ENCODE measurements at regions of chr1 and their contacts with region 1.

Region 1: DNA sequence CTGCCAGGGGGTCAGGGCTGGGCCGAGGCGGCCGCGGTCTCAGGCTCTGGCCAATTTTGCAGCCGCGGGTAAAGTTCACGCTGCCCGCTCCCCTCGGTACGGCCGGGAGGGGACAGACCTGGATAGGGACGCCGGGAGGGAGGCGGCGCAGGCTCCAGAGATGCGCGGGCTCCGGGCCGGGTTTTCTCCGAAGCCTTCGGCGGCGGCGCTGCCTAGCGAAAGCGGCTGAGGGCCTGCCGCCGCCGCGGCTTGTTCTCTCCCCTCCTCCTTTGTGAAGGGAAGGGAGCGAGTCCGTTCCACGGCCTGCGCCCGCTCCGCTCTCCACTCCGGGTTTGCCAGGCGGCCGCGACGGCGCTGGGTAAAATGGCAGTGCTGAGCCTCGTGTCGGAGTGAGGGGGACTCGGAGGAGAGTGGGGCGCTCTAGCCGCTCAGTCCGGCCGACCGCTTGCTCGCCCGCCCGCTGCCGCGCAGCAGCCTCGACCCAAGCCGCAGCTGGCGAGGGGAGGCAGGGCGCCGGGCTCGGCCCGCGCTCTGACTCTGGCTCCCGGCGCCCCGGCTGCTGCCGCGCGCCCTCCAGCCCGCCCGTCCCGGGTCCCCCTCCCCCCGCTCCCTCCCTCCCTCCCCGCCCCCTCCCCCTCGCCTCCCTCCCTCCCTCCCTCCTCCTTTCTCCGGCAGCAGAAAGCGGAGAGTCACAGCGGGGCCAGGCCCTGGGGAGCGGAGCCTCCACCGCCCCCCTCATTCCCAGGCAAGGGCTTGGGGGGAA is at the start of gene ARID1A:
- DNase-seq: peak; percentile 92 to 98 (median 95)
- ATAC-seq: peak; percentile 59
- H3K4me3 ChIP-seq: peak within 1 kb of the TSS; percentile 74 to 86
- H3K4me3 Mint-ChIP-seq: peak within 1 kb of the TSS; percentile 93
- H3K27ac ChIP-seq: peak within 1 kb of the TSS; percentile 44 to 72
- H3K27ac Mint-ChIP-seq: peak within 1 kb of the TSS; percentile 94
- H3K4me1 ChIP-seq: peaks cover 51% of the 10 kb centered on the region
- H3K4me1 Mint-ChIP-seq: peaks cover 35% of the 10 kb centered on the region
- H3K27me3 ChIP-seq: no peaks in the 10 kb centered on the region
- H3K27me3 Mint-ChIP-seq: no peaks in the 10 kb centered on the region
- CTCF ChIP-seq: no peak
- total RNA-seq, gene ARID1A: 104 to 105 TPM

Region 2: GRCh38 chr1:26431979-26432695 is 263.4 kb before region 1 on chr1 and contains the start of gene DHDDS:
- CTCF ChIA-PET with region 1: no interaction called
- POLR2A ChIA-PET with region 1: interaction called, 3 read pairs
- intact Hi-C with region 1: loop called in 1 of 2 experiments (anchors 2 kb)
- DNase-seq: peak; percentile 96 to 99 (median 99)
- ATAC-seq: peak; percentile 96
- H3K4me3 ChIP-seq: peak within 1 kb of the TSS; percentile 72 to 78
- H3K4me3 Mint-ChIP-seq: peak within 1 kb of the TSS; percentile 95
- H3K27ac ChIP-seq: peak within 1 kb of the TSS; percentile 73 to 81
- H3K27ac Mint-ChIP-seq: peak within 1 kb of the TSS; percentile 96
- H3K4me1 ChIP-seq: peaks cover 20% of the 10 kb centered on the region
- H3K4me1 Mint-ChIP-seq: peaks cover 21% of the 10 kb centered on the region
- H3K27me3 ChIP-seq: no peaks in the 10 kb centered on the region
- H3K27me3 Mint-ChIP-seq: no peaks in the 10 kb centered on the region
- CTCF ChIP-seq: no peak
- total RNA-seq, gene DHDDS: 23.9 to 29.2 TPM

Region 3: DNA sequence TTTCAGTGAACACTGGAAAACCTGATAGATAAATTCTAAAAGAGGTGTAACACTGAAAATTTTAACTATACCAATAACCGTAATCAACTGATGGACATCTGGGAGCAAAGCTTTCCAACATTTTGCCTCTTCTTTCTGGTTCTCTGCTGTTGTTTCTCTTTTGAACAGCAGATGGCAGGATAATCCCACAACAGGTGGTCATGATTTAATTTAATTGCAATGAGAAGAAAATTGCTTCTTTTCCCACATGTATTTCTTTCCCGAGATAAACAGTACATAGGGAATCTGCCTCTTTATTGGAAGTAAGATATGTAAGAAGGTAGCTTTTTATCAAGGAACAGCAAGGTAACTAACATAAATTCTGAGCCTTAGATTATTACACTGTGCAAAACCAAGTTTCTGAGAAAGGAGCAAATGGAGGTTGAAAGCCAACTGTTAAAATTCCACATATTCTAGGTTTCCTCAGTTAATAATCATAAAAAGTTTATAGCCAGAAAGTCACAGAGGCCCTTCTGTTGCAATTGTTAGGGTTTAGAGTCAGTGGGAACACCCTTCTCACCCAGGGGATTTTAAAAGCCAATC is 93.1 kb before region 1 on chr1:
- CTCF ChIA-PET with region 1: interaction called, 44 read pairs
- POLR2A ChIA-PET with region 1: interaction called, 20 read pairs
- intact Hi-C with region 1: loop called in 1 of 2 experiments (anchors 1 kb)
- DNase-seq: peak in 5 of 9 experiments; percentile 16 to 81 (median 49)
- ATAC-seq: peak; percentile 67
- H3K4me3 ChIP-seq: no peak overlapping the region
- H3K4me3 Mint-ChIP-seq: no peak overlapping the region
- H3K27ac ChIP-seq: no peak overlapping the region
- H3K27ac Mint-ChIP-seq: no peak overlapping the region
- H3K4me1 ChIP-seq: peaks cover 5% of the 10 kb centered on the region
- H3K4me1 Mint-ChIP-seq: peaks cover 8% of the 10 kb centered on the region
- H3K27me3 ChIP-seq: no peaks in the 10 kb centered on the region
- H3K27me3 Mint-ChIP-seq: no peaks in the 10 kb centered on the region
- CTCF ChIP-seq: peak; percentile 98

Region 4: GRCh38 chr1:26705788-26706311 is 10.3 kb after region 1 on chr1:
- CTCF ChIA-PET with region 1: interaction called, 17 read pairs
- POLR2A ChIA-PET with region 1: interaction called, 20 read pairs
- intact Hi-C with region 1: loop called in 1 of 2 experiments (anchors 1 kb)
- DNase-seq: no peak
- ATAC-seq: no peak
- H3K4me3 ChIP-seq: no peak overlapping the region
- H3K4me3 Mint-ChIP-seq: peak overlapping the region; percentile 68
- H3K27ac ChIP-seq: peak overlapping the region in 1 of 2 experiments; percentile 39
- H3K27ac Mint-ChIP-seq: peak overlapping the region; percentile 87
- H3K4me1 ChIP-seq: peaks cover 71% of the 10 kb centered on the region
- H3K4me1 Mint-ChIP-seq: peaks cover 49% of the 10 kb centered on the region
- H3K27me3 ChIP-seq: no peaks in the 10 kb centered on the region
- H3K27me3 Mint-ChIP-seq: no peaks in the 10 kb centered on the region
- CTCF ChIP-seq: no peak

Region 5: DNA sequence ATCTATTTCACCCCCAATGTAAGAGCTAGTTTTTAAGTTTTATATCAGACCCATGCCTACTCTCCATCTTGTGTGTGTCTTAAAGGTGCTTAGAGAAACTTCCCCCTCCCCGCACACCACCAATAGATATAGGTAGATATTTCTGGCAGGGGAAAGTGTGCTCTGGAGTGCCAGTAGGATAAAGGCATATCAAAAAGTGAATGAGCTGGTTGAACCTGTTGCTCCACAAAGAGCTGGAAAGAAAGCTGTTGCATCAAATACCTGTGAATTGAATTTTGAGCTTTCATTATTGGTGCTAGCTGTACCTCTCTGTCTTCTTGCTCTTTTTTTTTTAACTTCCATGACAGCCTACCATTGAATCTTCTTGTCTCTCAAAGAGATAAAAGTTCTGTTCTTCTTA is 33.1 kb after region 1 on chr1:
- CTCF ChIA-PET with region 1: interaction called, 4 read pairs
- POLR2A ChIA-PET with region 1: interaction called, 22 read pairs
- intact Hi-C with region 1: loop called in 1 of 2 experiments (anchors 2 kb)
- DNase-seq: no peak
- ATAC-seq: no peak
- H3K4me3 ChIP-seq: no peak overlapping the region
- H3K4me3 Mint-ChIP-seq: no peak overlapping the region
- H3K27ac ChIP-seq: peak overlapping the region in 1 of 2 experiments; percentile 24
- H3K27ac Mint-ChIP-seq: peak overlapping the region; percentile 43
- H3K4me1 ChIP-seq: peaks cover 68% of the 10 kb centered on the region
- H3K4me1 Mint-ChIP-seq: peaks cover 88% of the 10 kb centered on the region
- H3K27me3 ChIP-seq: no peaks in the 10 kb centered on the region
- H3K27me3 Mint-ChIP-seq: no peaks in the 10 kb centered on the region
- CTCF ChIP-seq: no peak

Region 6: DNA sequence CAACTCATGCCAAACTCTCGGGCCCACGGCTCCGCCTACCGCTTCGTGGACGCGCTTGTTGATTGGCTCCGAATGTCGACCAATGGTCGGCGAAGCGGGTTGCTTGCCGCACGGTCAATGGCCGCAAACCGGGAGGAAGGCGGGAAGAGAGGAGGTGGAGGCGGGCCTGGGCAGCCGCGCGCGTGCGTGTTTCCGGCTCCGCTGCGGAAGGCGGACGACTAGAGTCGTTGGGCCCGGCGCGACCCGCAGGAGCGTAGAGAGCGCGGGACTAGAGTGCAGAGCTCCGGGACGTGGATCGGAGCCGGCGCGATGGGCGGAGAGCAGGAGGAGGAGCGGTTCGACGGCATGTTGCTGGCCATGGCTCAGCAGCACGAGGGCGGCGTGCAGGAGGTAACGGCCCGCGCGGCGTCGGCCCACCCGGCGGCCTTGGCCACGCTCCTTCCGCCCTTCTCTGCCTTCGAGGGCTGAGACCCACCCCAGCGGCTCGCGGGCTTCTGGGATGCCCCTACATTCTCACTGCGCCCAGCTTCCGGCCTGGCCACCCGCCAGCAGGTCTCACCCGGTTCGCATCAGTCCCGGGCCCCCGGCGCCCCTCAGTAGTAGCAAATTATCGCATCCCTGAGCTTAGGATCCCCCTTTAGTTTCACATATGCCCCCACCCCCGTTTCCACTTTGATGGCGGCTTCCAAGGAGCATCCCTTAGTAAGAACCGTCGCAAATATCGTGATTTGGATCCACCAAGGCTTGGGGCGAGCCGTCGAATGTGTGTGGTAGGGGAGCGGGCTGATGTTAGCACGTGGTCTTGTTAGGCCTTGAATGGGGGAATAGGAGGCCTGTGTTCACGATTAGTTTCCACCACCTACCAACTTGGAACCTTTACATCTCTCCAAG is 226.2 kb after region 1 on chr1 and contains the start of gene NUDC:
- CTCF ChIA-PET with region 1: no interaction called
- POLR2A ChIA-PET with region 1: no interaction called
- intact Hi-C with region 1: loop called in 1 of 2 experiments (anchors 1 kb)
- DNase-seq: peak; percentile 91 to 98 (median 94)
- ATAC-seq: peak; percentile 92
- H3K4me3 ChIP-seq: peak within 1 kb of the TSS; percentile 84 to 95
- H3K4me3 Mint-ChIP-seq: peak within 1 kb of the TSS; percentile 95
- H3K27ac ChIP-seq: peak within 1 kb of the TSS; percentile 87 to 90
- H3K27ac Mint-ChIP-seq: peak within 1 kb of the TSS; percentile 99
- H3K4me1 ChIP-seq: peaks cover 23% of the 10 kb centered on the region
- H3K4me1 Mint-ChIP-seq: peaks cover 34% of the 10 kb centered on the region
- H3K27me3 ChIP-seq: no peaks in the 10 kb centered on the region
- H3K27me3 Mint-ChIP-seq: no peaks in the 10 kb centered on the region
- CTCF ChIP-seq: no peak
- total RNA-seq, gene NUDC: 51.9 to 55.0 TPM

Region 7: GRCh38 chr1:27010989-27011764 is 315.6 kb after region 1 on chr1:
- CTCF ChIA-PET with region 1: no interaction called
- POLR2A ChIA-PET with region 1: no interaction called
- intact Hi-C with region 1: no loop called
- DNase-seq: no peak
- ATAC-seq: no peak
- H3K4me3 ChIP-seq: no peak overlapping the region
- H3K4me3 Mint-ChIP-seq: no peak overlapping the region
- H3K27ac ChIP-seq: no peak overlapping the region
- H3K27ac Mint-ChIP-seq: no peak overlapping the region
- H3K4me1 ChIP-seq: peaks cover 7% of the 10 kb centered on the region
- H3K4me1 Mint-ChIP-seq: peaks cover 14% of the 10 kb centered on the region
- H3K27me3 ChIP-seq: peaks cover 8 to 19% of the 10 kb centered on the region in 2 experiments
- H3K27me3 Mint-ChIP-seq: peaks cover 25% of the 10 kb centered on the region
- CTCF ChIP-seq: no peak

Region 8: DNA sequence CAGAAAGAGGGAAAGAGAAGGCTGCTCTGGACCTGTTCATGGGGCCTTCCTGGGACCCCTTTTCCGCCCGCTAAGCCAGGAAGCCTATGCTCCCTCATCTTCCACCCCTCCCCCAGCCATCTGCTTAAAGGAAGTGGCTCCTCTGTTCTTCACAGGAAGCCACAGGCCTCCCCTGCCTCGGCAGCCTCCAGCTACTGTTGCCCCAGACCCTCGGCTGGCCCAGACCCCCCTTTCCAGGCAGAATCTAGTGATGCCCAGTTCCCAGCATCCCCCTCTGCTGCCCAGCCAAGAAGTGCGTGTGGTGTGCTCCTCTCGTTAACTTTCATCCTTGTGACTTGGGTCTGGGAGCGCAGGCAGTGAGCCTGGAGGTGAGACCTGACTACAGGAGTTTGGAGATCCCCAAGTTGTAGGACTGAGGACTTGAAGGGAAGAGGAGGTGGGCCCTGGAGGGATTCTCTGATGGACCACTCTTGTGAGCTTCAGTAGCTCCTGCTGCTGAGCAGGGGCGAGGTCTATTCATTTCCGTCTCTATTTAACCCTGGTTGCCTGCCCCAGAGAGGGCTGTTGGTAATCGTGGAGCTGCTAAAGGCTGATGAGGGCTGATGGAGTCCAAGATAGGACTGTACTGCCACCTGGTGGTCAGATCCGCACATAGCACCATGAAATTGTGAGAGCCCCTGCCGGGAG is 967.3 kb after region 1 on chr1:
- CTCF ChIA-PET with region 1: no interaction called
- POLR2A ChIA-PET with region 1: no interaction called
- intact Hi-C with region 1: no loop called
- DNase-seq: peak; percentile 82 to 96 (median 90)
- ATAC-seq: peak; percentile 72
- H3K4me3 ChIP-seq: peak overlapping the region; percentile 50 to 59
- H3K4me3 Mint-ChIP-seq: peak overlapping the region; percentile 81
- H3K27ac ChIP-seq: peak overlapping the region; percentile 87 to 95
- H3K27ac Mint-ChIP-seq: peak overlapping the region; percentile 97
- H3K4me1 ChIP-seq: peaks cover 46% of the 10 kb centered on the region
- H3K4me1 Mint-ChIP-seq: peaks cover 46% of the 10 kb centered on the region
- H3K27me3 ChIP-seq: no peaks in the 10 kb centered on the region
- H3K27me3 Mint-ChIP-seq: no peaks in the 10 kb centered on the region
- CTCF ChIP-seq: peak; percentile 74

Measured in CD8-positive, alpha-beta T cell (primary cell).